ENCODE measurements at regions of chr4 and their contacts with region 1.

Region 1: DNA sequence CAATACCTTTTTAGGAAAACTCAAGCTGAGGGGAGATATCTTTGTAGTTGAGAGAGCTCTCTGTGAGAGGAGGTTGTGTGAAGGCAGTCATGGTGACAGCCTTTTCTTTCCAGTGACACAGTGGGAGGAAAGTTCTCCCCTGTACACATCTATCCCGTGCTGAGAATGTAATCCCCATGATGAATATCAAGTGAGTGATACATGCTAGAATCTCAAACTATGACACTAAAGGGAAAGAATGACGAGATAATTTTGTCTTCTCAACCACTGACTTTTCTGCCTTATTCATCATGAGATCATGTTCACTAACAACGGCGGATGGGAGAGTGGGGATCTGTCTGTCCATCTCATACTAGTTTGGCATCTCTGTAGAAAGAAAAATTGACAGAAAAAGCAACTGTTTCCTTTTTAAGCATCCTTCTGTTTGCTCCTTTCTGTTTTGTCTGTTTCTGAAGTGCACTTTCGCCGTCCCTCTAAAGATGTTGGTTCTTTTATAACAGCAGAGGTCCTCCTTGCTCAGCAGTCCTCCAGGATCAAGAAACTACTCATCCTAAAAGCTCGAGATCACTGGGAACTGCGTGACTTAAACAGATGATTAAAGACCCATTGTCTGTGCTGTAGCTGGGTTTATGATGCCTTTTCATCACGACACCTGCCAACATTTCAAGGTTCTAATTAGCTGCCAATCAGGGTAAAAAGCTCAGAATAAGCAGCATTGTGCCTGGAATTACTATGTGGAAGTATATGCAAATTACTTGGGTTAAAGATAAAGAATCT is 137.6 kb downstream of the DCK start:
- DNase-seq: peak; percentile 92
- H3K4me3 ChIP-seq: peak overlapping the region; percentile 65
- H3K27ac ChIP-seq: peak overlapping the region; percentile 90
- H3K4me1 ChIP-seq: peaks cover 44% of the 10 kb centered on the region
- H3K27me3 ChIP-seq: no peaks in the 10 kb centered on the region

Region 2: DNA sequence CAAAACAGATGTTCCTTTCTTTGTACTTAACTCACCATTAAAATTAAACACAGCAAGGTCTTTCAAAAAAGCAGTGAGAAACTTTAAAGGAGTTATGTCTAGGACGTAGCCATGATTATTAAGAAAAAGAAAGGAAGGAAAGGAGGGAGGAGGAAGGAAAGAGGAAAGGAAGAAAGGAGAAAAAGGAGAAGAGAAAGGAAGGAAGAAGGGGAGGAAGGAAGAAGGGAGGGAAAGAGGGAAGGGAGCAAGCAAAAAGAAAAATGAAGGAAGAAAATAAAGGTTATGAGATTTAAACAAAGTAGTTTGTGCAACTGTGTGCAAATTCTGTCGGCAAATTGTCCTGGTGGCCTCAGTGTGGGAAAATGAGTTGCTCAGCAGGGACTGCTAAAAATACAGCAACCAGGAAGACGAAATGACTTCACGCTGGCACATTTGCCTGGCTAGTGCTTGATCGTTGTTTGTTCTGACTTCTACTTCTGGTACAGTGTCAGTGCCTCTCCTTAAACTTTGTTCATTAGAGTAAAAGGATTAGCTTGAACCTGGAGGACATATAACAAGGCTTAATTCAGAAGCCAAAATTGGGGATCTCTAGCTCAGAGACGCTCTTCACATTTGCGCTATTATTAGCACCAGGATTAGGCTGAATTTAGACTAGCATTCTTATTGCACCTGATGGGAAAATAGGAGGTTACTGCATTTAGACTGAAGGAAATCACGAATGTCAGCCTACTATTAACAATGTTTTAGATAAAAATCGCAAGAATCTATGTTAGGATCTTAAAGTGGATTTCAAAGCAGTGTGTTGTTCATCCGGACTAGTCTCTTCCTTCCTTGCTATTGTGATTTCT is 56.3 kb before region 1 on chr4:
- in situ Hi-C with region 1: no loop called
- DNase-seq: peak; percentile 49
- H3K4me3 ChIP-seq: peak overlapping the region; percentile 26
- H3K27ac ChIP-seq: no peak overlapping the region
- H3K4me1 ChIP-seq: peaks cover 4% of the 10 kb centered on the region; the same call in 1 of the 2 replicates
- H3K27me3 ChIP-seq: no peaks in the 10 kb centered on the region

Region 3: DNA sequence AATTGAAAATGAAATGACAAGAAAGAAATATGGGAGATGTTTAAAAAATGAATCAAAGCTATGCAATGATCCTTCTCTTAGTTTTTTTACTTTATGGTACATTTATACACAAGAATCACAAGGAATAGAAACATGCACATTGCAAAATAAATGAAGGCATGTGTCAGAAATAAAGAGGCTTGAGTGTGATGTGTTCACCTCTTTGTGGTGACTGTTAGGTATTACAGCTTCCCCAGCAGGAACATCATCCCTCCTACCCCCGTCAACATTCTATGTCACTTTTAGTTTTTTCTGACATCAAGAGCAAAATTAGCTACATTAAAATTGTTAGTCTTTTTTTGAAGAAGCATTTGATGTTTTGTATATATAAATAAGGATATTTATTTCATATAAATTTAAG is 422.6 kb after region 1 on chr4:
- in situ Hi-C with region 1: loop called (anchors 10 kb)
- DNase-seq: peak; percentile 71
- H3K4me3 ChIP-seq: no peak overlapping the region
- H3K27ac ChIP-seq: no peak overlapping the region
- H3K4me1 ChIP-seq: peaks cover 10% of the 10 kb centered on the region
- H3K27me3 ChIP-seq: no peaks in the 10 kb centered on the region

Region 4: GRCh38 chr4:71713611-71714203 is 582.7 kb after region 1 on chr4:
- in situ Hi-C with region 1: loop called (anchors 25 kb)
- DNase-seq: peak; percentile 84
- H3K4me3 ChIP-seq: no peak overlapping the region
- H3K27ac ChIP-seq: no peak overlapping the region
- H3K4me1 ChIP-seq: no peaks in the 10 kb centered on the region
- H3K27me3 ChIP-seq: peaks cover 3% of the 10 kb centered on the region; the same call in 1 of the 2 replicates